Adrenal gland (tissue), 19 donors: ENCODE measurements at regions of chr1 and their contacts with region 1.

Region 1: DNA sequence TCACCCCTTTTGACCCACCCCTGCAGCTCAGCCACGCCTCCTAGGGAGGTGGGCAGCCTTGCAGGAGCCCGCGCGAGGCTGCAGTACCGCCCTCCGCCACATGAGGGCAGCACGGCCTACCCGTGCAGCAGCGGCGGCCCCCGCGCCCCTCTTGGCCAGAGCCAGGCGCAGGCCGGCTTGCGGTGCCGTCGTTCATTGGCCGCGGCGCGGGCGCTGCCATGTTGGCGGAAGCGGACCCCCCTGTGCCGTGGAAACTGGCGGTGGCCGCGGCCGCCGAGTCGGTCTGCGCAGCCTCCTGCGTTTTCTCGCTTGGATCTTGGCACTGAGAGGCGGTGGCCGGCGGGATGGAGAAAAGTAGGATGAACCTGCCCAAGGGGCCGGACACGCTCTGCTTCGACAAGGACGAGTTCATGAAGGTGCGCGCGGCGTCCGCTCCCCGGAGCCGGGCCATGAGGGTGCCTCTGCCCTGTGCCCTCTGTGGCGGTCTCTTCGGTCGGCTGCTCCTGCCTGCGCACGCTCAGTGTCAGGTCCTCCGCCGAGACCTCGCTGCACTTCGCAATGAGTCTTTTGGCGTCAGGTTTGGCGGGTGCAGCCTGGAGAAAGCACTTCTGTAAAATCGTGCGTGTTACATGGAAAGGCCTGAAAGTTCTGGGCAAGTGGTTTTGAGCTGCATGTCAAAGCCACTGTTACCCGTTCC is at the start of gene COG2:
- DNase-seq: peak; percentile 93 to 97 (median 96)
- H3K4me3 ChIP-seq: peak within 1 kb of the TSS; percentile 7 to 63 (median 36)
- H3K27ac ChIP-seq: peak within 1 kb of the TSS; percentile 16 to 88 (median 79)
- H3K4me1 ChIP-seq: peaks cover 27 to 31% of the 10 kb centered on the region in 2 donors
- H3K27me3 ChIP-seq: no peaks in the 10 kb centered on the region
- CTCF ChIP-seq: peak; percentile 92 to 100 (median 98)
- POLR2A ChIP-seq: peak; percentile 77
- total RNA-seq, gene COG2: 36.3 to 80.1 (median 51.4) TPM

Region 2: DNA sequence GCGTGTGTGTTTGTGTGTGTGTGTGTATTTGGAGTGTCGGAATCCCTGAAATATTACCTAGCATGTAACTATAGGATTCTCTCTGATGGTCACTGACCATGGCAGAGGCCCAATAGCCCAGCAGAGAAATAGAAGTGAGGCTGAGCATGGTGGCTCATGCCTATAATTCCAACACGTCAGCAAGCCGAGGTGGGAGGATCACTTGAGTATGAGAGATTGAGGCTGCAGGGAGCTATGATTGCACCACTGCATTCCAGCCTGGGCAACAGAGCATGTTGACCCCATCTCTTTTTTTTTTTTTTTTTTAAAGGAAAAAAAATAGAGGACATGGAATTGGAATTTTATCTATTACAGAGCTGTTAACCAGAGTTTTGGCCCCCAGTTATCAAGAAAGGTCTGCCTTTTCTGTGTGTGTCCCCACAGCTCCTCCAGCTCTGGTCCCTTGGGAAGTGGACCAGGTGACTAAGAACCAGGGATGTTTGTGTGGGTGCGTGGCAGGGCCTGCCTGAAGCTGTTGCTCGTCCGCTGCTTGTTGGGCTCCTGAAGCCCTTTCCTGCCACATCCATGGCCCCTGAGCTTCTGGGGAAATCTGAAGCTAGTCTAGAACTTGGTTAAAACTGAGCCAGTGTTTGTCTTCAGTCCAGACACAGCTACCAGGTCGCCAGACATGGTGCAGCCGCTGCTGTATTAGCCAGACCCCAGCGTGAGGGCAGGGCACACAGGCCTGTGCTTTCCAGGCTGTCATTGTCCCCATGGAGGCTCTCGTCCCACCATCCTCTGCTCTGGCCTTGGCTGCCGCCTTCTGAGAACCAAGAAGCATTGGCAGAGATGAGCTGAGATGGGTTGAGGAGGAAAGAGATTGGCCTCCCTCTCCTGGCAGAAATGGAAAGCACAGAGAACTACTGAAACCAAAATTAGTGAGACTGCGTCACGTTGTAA is 130.3 kb after region 1 on chr1:
- intact Hi-C with region 1: loop called (anchors 5 kb)
- DNase-seq: peak; percentile 46 to 86 (median 80)
- H3K4me3 ChIP-seq: no peak overlapping the region
- H3K27ac ChIP-seq: no peak overlapping the region
- H3K4me1 ChIP-seq: peaks cover 0 to 3% of the 10 kb centered on the region in 2 donors
- H3K27me3 ChIP-seq: no peaks in the 10 kb centered on the region
- CTCF ChIP-seq: peak; percentile 41 to 95 (median 88)
- POLR2A ChIP-seq: no peak

Region 3: GRCh38 chr1:230778916-230779590 is 136.6 kb after region 1 on chr1:
- intact Hi-C with region 1: loop called (anchors 5 kb)
- DNase-seq: no peak
- H3K4me3 ChIP-seq: no peak overlapping the region
- H3K27ac ChIP-seq: no peak overlapping the region
- H3K4me1 ChIP-seq: no peaks in the 10 kb centered on the region
- H3K27me3 ChIP-seq: no peaks in the 10 kb centered on the region
- CTCF ChIP-seq: no peak
- POLR2A ChIP-seq: no peak